Panc1 (cell line): ENCODE measurements at regions of chr4 and their contacts with region 1.

Region 1: GRCh38 chr4:122827879-122828601 is 1.4 kb downstream of the FGF2 start:
- DNase-seq: no peak
- ATAC-seq: peak; percentile 73
- H3K4me3 ChIP-seq: peak overlapping the region; percentile 73 to 77
- H3K27ac ChIP-seq: peak overlapping the region; percentile 89
- H3K4me1 ChIP-seq: peaks cover 23% of the 10 kb centered on the region
- H3K27me3 ChIP-seq: no peaks in the 10 kb centered on the region
- CTCF ChIP-seq: no peak

Region 2: DNA sequence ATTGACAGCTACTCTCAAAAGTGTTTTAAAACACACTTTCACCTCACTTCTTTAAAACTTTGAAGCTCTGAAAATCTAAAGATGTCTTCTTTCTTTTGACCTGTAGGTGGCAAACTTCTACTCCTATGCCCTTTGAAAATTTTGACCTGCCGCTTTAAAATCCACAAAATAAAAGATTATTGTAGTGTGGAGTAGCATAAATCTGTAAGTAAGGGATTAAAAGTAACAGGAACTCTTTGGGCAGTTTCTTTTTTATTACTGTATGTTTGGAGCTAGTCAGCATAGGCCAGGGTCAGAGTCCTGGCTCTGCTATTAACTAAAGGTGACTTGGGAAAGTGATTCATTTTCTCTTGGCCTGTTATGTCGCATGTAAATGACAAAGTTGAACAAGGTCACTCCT is 70.0 kb before region 1 on chr4:
- CTCF ChIA-PET with region 1: no interaction called
- POLR2A ChIA-PET with region 1: no interaction called
- in situ Hi-C with region 1: no loop called
- intact Hi-C with region 1: loop called (anchors 5 kb)
- DNase-seq: peak; percentile 35
- ATAC-seq: peak; percentile 63
- H3K4me3 ChIP-seq: no peak overlapping the region
- H3K27ac ChIP-seq: peak overlapping the region; percentile 65
- H3K4me1 ChIP-seq: peaks cover 13% of the 10 kb centered on the region
- H3K27me3 ChIP-seq: no peaks in the 10 kb centered on the region
- CTCF ChIP-seq: peak; percentile 64; the same call in 1 of the 2 replicates

Region 3: GRCh38 chr4:122783301-122784215 is 44.5 kb before region 1 on chr4:
- CTCF ChIA-PET with region 1: interaction called, 3 read pairs
- POLR2A ChIA-PET with region 1: no interaction called
- in situ Hi-C with region 1: no loop called
- intact Hi-C with region 1: loop called (anchors 5 kb)
- DNase-seq: peak; percentile 84
- ATAC-seq: peak; percentile 100
- H3K4me3 ChIP-seq: no peak overlapping the region
- H3K27ac ChIP-seq: peak overlapping the region; percentile 78
- H3K4me1 ChIP-seq: peaks cover 8% of the 10 kb centered on the region; the same call in 1 of the 2 replicates
- H3K27me3 ChIP-seq: no peaks in the 10 kb centered on the region
- CTCF ChIP-seq: no peak